Activated CD4-positive, alpha-beta memory T cell treated with anti-CD3 and anti-CD28 coated beads for 36 hours (primary cell): ENCODE measurements at regions of chr11 and their contacts with region 1.

Region 1: GRCh38 chr11:67439321-67439883 is 1.9 kb upstream of the PTPRCAP start:
- DNase-seq: peak; percentile 72
- H3K4me3 Mint-ChIP-seq: peak overlapping the region; percentile 85
- H3K27ac Mint-ChIP-seq: peak overlapping the region; percentile 95
- H3K4me1 Mint-ChIP-seq: peaks cover 51% of the 10 kb centered on the region
- H3K27me3 Mint-ChIP-seq: no peaks in the 10 kb centered on the region

Region 2: GRCh38 chr11:67409261-67409666 is 30.1 kb before region 1 on chr11:
- CTCF ChIA-PET with region 1: interaction called, 46 read pairs
- POLR2A ChIA-PET with region 1: interaction called, 68 read pairs
- intact Hi-C with region 1: loop called (anchors 2 kb)
- DNase-seq: peak; percentile 86
- H3K4me3 Mint-ChIP-seq: peak overlapping the region; percentile 87
- H3K27ac Mint-ChIP-seq: peak overlapping the region; percentile 93
- H3K4me1 Mint-ChIP-seq: peaks cover 81% of the 10 kb centered on the region
- H3K27me3 Mint-ChIP-seq: no peaks in the 10 kb centered on the region

Region 3: DNA sequence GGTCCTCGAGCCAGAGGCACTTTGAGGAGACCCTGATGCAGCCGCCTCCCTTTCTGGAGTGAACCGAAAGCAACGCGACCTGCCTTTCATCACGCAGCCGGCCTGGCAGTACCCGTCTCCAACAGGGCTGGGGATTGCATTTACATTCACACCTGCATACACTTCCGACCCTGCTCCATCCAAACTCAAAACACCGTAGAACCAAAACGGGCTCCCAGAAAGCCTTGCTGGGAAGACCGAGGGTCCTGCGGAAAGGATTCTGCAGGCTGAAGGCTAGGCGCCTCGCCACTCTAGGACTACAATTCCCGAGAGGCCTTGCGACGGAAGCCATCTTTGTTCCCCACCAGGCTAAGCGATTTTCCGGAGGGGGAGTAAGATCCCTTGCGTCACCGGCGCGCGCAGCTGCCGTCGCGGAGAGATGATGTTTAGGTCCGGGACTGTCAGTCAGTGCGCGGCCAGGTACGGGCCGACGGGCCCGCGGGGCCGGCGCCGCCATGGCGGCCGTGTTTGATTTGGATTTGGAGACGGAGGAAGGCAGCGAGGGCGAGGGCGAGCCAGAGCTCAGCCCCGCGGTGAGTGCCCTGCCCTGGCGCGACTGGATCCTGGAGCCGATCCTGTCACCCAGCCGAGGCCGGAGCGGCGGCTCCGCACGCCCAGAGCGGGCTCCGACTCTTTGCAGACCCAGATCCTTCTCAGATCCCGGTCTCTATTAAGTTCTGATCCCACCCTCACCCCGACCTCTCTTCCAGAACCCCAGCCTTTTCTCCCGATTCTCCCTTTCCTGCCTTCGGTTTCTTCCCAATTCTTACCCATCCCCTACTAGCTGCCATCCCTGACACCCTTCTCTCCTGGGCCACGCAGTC is 11.1 kb before region 1 on chr11 and contains the start of gene RPS6KB2:
- CTCF ChIA-PET with region 1: interaction called, 6 read pairs
- POLR2A ChIA-PET with region 1: interaction called, 24 read pairs
- intact Hi-C with region 1: loop called (anchors 1 kb)
- DNase-seq: peak; percentile 100
- H3K4me3 Mint-ChIP-seq: peak within 1 kb of the TSS; percentile 91
- H3K27ac Mint-ChIP-seq: peak within 1 kb of the TSS; percentile 91
- H3K4me1 Mint-ChIP-seq: peaks cover 32% of the 10 kb centered on the region
- H3K27me3 Mint-ChIP-seq: no peaks in the 10 kb centered on the region
- total RNA-seq, gene RPS6KB2: 57.4 to 57.5 TPM

Region 4: GRCh38 chr11:67468835-67469811 is 29.7 kb after region 1 on chr11 and contains the start of gene TMEM134:
- CTCF ChIA-PET with region 1: interaction called, 6 read pairs
- POLR2A ChIA-PET with region 1: interaction called, 25 read pairs
- intact Hi-C with region 1: loop called (anchors 2 kb)
- DNase-seq: peak; percentile 95
- H3K4me3 Mint-ChIP-seq: peak within 1 kb of the TSS; percentile 90
- H3K27ac Mint-ChIP-seq: peak within 1 kb of the TSS; percentile 90
- H3K4me1 Mint-ChIP-seq: peaks cover 30% of the 10 kb centered on the region
- H3K27me3 Mint-ChIP-seq: no peaks in the 10 kb centered on the region
- total RNA-seq, gene TMEM134: 68.2 to 75.2 TPM